ENCODE measurements at regions of chr13 and their contacts with region 1.

Region 1: GRCh38 chr13:41458761-41459431 is 1.5 kb downstream of the RGCC start:
- DNase-seq: peak; percentile 32
- H3K4me3 ChIP-seq: peak overlapping the region in 1 of 2 experiments; percentile 48; a peak in 1 of 4 replicates
- H3K27ac ChIP-seq: no peak overlapping the region
- H3K4me1 ChIP-seq: peaks cover 5 to 19% of the 10 kb centered on the region in 2 experiments; a peak in 2 of 4 replicates
- H3K27me3 ChIP-seq: peaks cover 44% of the 10 kb centered on the region
- CTCF ChIP-seq: peak; percentile 57
- EP300 ChIP-seq: no peak
- RAD21 ChIP-seq: no peak

Region 2: DNA sequence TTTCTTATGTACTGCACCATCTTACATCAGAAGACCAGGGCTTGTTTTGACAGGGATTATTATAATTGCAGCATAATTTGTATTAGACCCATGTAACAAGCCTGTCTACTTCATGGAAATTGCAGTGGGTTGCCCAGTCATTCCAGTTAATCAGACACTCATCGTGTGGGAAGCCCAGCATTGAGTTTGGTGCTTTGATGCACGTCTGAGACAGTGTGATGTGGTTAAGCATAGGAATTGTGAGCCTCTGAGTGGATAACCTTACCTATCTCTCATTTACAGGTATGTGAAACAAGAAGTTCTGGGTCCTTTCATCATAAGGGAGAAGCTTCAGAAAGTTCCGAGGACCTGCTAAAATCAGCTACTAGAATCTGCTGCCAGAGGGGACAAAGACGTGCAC is 11.3 kb after region 1 on chr13:
- CTCF ChIA-PET with region 1: interaction called, 10 read pairs
- POLR2A ChIA-PET with region 1: no interaction called
- DNase-seq: no peak
- H3K4me3 ChIP-seq: no peak overlapping the region
- H3K27ac ChIP-seq: no peak overlapping the region
- H3K4me1 ChIP-seq: no peaks in the 10 kb centered on the region
- H3K27me3 ChIP-seq: no peaks in the 10 kb centered on the region; the same call in 1 of the 2 replicates
- CTCF ChIP-seq: no peak
- EP300 ChIP-seq: no peak
- RAD21 ChIP-seq: no peak

Region 3: GRCh38 chr13:42377640-42378382 is 918.9 kb after region 1 on chr13:
- CTCF ChIA-PET with region 1: no interaction called
- POLR2A ChIA-PET with region 1: no interaction called
- DNase-seq: no peak
- H3K4me3 ChIP-seq: no peak overlapping the region
- H3K27ac ChIP-seq: no peak overlapping the region
- H3K4me1 ChIP-seq: no peaks in the 10 kb centered on the region
- H3K27me3 ChIP-seq: no peaks in the 10 kb centered on the region
- CTCF ChIP-seq: no peak
- EP300 ChIP-seq: no peak
- RAD21 ChIP-seq: no peak